Activated naive CD4-positive, alpha-beta T cell treated with anti-CD3 and anti-CD28 coated beads, Interleukin-2, amount 10 ng/mL, durations not matched to agents 7 days and 5 days (primary cell): ENCODE measurements at regions of chr7 and their contacts with region 1.

Region 1: DNA sequence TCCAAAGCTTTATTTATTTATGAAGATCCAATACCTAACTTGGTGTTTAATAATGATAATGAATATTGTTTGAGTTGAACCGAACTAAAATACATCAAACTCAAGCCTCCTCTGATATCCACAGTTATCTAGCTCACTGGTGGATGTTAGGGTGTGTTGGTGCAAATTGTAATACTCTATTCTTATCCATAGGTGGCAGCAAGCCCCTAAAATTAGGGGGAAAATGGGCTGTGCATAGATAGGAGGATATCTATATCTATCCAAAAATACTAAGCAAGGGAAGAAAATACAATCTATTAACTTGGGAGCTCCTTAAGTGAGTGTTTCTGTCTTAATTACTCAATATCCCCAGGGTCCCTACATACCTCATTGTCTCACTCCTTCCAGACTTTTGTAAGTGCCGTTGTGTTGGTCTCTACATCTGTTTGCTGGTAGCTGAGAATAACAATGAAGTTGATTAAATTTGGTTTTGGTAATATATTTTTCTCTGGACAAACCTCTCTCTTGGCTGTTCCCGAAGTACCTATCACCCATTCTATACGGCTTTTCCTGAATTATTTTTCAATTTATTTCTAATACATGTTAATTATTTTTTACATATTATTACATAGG is 55.0 kb upstream of the VWDE start:
- DNase-seq: no peak
- H3K4me3 Mint-ChIP-seq: no peak overlapping the region
- H3K27ac Mint-ChIP-seq: no peak overlapping the region
- H3K4me1 Mint-ChIP-seq: no peaks in the 10 kb centered on the region
- H3K27me3 Mint-ChIP-seq: peaks cover 4% of the 10 kb centered on the region

Region 2: DNA sequence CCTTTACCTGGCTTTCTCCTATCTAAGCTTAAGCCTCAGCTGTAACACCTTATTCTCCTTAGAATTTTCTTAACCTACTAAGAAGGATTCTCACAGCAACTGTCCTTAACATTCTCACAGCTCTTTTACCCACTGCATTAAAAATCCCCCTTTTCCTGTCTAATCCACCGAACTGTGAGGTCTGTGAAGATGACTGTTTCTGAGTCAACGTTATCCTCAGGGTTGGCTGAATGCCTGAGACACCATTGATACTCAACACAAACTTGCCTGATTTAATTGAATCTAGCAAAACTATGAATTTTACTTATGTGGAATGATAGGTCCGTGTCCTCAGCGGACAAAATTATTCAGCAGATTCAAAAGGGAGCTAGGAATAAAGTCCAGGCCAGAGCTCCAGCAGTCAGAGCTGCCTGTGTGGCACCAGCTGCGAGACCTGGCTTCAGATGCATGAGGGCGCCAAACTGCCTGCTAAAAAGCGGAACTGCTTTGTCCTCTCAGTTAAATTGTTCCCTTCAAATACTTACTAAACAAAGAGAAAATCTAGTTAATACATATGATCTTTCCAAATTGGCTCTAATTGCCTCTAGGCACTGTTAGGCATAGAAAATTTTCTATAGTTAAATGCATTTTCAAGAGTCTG is 21.6 kb before region 1 on chr7:
- CTCF ChIA-PET with region 1: interaction called, 22 read pairs
- DNase-seq: no peak
- H3K4me3 Mint-ChIP-seq: no peak overlapping the region
- H3K27ac Mint-ChIP-seq: no peak overlapping the region
- H3K4me1 Mint-ChIP-seq: no peaks in the 10 kb centered on the region
- H3K27me3 Mint-ChIP-seq: peaks cover 5% of the 10 kb centered on the region

Region 3: DNA sequence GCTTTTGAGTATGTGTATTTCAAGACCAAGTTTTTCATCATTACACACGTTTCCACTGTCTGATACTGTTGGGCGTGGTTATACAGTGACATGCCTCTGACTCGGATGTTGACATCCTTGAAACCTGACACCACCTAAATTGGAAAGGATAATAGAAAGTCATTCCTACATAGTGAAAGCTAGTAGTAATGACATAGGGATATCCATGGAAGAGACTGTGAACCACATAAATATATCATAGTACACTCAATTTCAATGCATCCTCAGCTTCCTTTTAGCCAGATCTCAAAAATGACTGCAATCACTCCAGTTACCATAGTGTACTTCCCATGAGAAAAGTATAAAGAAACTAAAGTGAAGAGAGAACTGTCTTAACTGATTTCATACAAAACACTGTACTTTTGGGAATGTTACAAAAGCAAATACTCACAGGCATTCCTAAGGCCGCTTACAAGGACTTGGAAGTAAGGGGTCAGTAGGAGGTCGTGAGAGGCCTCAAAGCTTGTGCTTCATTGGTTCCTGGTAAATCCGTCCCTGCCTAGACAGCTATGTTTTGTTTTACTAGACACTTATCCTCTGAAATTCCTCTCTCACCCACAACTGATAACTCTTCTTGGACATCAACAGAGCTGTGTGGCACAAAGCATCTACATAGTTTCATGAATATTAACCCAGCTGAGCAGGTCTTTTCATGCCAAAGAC is 16.9 kb after region 1 on chr7:
- CTCF ChIA-PET with region 1: interaction called, 10 read pairs
- DNase-seq: no peak
- H3K4me3 Mint-ChIP-seq: no peak overlapping the region
- H3K27ac Mint-ChIP-seq: no peak overlapping the region
- H3K4me1 Mint-ChIP-seq: no peaks in the 10 kb centered on the region
- H3K27me3 Mint-ChIP-seq: peaks cover 5% of the 10 kb centered on the region

Region 4: GRCh38 chr7:12481722-12482121 is 23.1 kb after region 1 on chr7:
- CTCF ChIA-PET with region 1: interaction called, 15 read pairs
- DNase-seq: no peak
- H3K4me3 Mint-ChIP-seq: no peak overlapping the region
- H3K27ac Mint-ChIP-seq: peak overlapping the region; percentile 34
- H3K4me1 Mint-ChIP-seq: peaks cover 10% of the 10 kb centered on the region
- H3K27me3 Mint-ChIP-seq: peaks cover 3% of the 10 kb centered on the region

Region 5: DNA sequence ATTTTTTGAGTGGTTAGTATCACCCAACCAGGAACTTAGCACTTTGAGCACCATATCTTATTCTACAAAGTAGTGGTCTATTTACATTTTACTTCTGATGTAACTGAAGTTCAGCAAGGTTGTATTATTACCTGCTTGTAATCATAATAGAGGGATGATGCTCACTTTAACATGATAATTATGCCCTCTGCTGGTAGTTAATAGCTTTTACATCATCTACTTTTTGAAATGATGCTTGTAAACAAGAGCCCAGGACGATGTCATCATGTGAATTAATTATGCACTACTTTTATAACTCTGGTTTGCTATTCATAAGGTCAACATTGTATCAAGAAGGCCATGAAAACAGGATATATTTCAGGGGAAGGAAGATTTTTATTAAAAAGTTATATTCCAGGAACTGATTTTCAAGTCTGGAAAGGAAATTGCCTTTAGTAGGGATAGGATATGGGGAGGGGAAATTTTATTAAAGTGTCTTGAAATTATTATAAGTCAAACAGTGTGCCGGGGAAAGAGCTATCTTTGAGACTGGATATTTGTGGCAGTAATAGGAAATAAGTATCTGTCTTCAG is 31.6 kb after region 1 on chr7:
- CTCF ChIA-PET with region 1: interaction called, 83 read pairs
- DNase-seq: no peak
- H3K4me3 Mint-ChIP-seq: no peak overlapping the region
- H3K27ac Mint-ChIP-seq: no peak overlapping the region
- H3K4me1 Mint-ChIP-seq: no peaks in the 10 kb centered on the region
- H3K27me3 Mint-ChIP-seq: no peaks in the 10 kb centered on the region

Region 6: GRCh38 chr7:13126347-13126746 is 667.7 kb after region 1 on chr7:
- CTCF ChIA-PET with region 1: no interaction called
- DNase-seq: no peak
- H3K4me3 Mint-ChIP-seq: no peak overlapping the region
- H3K27ac Mint-ChIP-seq: no peak overlapping the region
- H3K4me1 Mint-ChIP-seq: no peaks in the 10 kb centered on the region
- H3K27me3 Mint-ChIP-seq: peaks cover 4% of the 10 kb centered on the region